ENCODE measurements at regions of chr20 and their contacts with region 1.

Region 1: GRCh38 chr20:1894951-1895673 is at the start of gene SIRPA:
- DNase-seq: peak; percentile 78
- ATAC-seq: peak; percentile 62 to 75
- total RNA-seq, gene SIRPA: 38.4 to 46.2 TPM

Region 2: GRCh38 chr20:1535420-1536175 is 359.5 kb before region 1 on chr20:
- intact Hi-C with region 1: no loop called
- DNase-seq: no peak
- ATAC-seq: peak in 1 of 2 donors; percentile 58

Region 3: DNA sequence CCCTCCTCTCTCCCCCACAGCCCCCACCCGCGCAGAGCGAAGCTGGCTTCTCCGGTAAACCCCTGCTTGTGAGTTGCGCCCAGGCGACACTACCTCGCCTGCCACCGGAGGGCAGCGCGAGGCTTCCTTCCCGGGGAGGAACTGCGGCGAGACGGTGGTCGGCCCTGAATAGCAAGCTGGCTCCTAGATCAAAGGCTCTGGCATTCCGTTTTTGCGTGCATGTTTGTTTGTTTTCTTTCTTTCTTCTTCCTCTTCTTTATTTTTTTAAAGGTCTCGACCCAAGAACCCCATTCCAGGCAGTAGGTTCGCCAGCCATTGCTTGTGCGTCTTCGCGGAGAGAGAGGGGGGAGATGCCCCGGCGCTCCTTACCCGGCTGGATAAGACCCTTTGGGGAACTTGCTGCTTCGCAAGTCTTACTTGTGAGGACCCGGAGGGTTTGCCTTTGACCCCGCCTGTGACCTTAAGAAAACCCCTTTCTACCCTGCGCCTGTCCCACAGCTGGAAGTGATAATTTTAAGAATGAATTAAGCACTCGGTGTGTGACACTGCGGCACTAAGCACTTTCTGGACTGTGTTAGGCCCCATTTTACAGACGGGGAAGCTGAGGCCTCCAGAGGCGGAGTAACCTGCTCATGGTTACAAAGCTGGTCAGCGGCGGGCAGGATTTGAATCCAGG is 92.6 kb before region 1 on chr20:
- intact Hi-C with region 1: loop called in 1 of 2 experiments (anchors 5 kb)
- DNase-seq: peak; percentile 79
- ATAC-seq: peak; percentile 83 to 85

Region 4: GRCh38 chr20:1827974-1828785 is 66.9 kb before region 1 on chr20:
- intact Hi-C with region 1: no loop called
- DNase-seq: peak; percentile 78
- ATAC-seq: peak; percentile 49 to 56

Region 5: GRCh38 chr20:1838556-1839279 is 56.4 kb before region 1 on chr20:
- intact Hi-C with region 1: loop called in 1 of 2 experiments (anchors 5 kb)
- DNase-seq: no peak
- ATAC-seq: no peak

Region 6: DNA sequence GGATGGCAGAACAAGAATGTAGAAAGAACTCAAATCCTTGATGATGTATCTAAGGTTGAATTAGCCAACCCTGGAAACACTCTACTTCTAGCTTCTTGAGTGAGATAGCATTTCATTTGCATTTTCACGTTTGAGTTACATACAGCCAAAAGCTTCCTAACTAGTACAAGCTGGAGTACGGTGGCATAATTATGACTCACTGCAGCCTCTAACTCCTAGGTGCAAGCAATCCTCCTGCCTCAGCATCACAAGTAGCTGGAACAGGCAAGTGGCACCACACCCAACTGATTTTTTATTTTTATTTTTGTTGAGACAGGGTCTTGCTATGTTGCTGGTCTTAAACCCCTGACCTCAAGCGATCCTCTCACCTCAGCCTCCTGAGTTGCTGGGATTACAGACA is 170.0 kb after region 1 on chr20:
- intact Hi-C with region 1: no loop called
- DNase-seq: no peak
- ATAC-seq: no peak

Measured in left cardiac atrium (tissue), 4 donors.